ENCODE measurements at regions of chr12 and their contacts with region 1.

Region 1: DNA sequence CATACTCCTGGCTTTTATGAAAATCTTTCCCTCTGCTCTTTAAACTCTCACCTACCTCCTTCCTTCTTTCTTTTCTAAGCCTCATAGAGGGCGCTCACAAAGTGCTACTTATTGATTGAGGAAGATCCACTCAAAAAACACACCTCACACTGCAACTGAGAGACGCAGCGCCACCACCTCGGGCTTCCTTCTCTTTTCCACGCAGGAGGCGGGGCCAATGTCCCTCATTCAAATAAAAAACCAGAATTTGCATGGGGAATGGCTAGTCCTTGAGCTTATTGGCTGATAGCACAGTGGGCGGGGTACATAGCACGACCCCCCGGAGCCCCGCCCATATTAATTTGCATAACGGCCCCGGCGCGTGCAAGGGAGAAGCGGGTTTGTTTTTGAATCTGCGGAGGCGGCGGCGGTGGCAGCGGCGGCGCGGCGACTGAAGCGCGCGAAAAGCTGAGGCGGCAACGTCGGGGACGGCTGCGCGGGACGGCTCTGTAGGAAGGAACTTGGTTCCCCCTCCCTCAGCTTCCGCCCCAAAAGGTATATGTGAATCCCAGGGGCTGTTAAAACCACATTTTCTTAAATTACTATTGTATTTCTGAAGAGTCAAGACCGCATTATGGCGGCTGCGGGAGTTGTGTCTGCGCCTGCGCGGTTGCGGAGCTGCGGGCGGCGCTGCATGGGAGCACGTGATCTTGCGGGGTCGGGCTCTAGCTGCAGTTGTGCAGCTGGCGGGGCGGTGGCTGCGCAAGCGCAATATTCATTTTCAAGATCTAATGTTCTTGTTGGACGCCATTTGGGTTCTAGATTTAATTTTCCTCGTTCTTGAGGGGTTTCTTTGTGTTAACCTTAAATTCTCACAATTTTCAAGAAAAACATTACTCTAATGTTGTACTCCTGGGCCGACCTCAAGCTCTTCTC is at the start of gene ATF7IP:
- H3K4me3 ChIP-seq: peak within 1 kb of the TSS; percentile 74
- H3K27ac ChIP-seq: peak within 1 kb of the TSS; percentile 96
- H3K4me1 ChIP-seq: peaks cover 3% of the 10 kb centered on the region; the same call in 1 of the 2 replicates
- CTCF ChIP-seq: peak; percentile 85; the same call in 1 of the 2 replicates

Region 2: DNA sequence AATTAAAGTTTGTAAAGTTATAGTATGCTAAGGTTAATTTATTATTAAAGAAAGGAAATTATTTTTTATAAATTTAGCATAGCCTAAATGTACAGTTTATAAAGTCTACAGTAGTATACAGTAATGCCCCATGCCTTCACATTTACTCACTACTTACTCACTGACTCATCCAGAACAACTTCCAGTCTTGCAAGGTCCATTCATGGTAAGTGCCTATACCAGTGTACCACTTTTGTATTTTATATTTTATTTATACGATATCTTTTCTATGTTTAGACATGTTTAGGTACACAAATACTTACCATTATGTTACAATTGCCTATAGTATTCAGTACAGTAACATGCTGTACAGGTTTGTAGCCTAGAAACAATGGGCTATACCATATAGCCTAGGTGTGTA is 289.0 kb before region 1 on chr12:
- CTCF ChIA-PET with region 1: no interaction called
- POLR2A ChIA-PET with region 1: no interaction called
- H3K4me3 ChIP-seq: no peak overlapping the region
- H3K27ac ChIP-seq: no peak overlapping the region
- H3K4me1 ChIP-seq: no peaks in the 10 kb centered on the region
- CTCF ChIP-seq: no peak

Region 3: GRCh38 chr12:14257734-14258574 is 107.6 kb before region 1 on chr12:
- CTCF ChIA-PET with region 1: interaction called, 14 read pairs
- POLR2A ChIA-PET with region 1: interaction called, 26 read pairs
- H3K4me3 ChIP-seq: no peak overlapping the region
- H3K27ac ChIP-seq: peak overlapping the region; percentile 48
- H3K4me1 ChIP-seq: peaks cover 9% of the 10 kb centered on the region
- CTCF ChIP-seq: 0 out of 2 replicates have a peak, but pooled peaks have one; percentile 44

Region 4: DNA sequence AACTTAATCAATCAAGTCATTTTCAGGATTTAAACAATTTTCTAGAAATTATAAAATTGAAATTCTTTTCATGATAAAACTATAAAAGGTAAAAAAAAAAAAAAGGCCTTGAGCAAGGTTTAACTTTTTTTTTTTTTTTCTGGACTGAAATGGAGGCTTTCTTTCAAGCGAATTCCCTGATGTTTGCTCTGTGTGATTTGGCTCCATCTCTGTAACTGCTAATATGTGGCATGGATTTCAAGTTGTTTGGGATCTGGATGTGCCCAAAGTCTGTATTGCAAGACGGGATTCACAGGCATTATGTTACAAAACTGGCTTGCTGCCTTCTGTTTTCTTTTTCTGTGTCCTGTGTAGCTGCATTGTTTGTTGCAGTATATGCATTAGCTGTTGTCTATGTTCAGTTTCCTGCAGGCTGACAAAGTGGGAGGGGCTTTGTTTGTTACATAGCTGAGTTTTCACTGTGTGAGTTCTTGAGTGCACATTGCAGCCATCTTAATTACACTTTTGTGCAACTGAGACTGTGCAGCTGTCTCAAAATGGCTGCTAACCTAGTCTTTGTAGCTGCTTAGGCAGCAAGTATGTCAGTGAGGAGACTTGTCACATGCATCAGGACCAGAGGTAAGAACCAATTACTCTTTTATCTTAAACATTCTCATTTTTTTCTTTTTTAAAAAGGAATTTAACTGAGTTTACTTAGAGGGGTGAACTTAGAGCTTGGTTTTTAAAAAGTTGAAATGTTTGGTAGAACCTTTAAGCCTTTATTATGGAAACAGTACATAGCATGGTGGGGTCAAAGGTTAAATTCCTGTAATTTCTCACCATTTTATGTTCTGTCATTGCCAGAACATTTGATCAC is 19.5 kb after region 1 on chr12:
- CTCF ChIA-PET with region 1: interaction called, 7 read pairs
- POLR2A ChIA-PET with region 1: interaction called, 24 read pairs
- H3K4me3 ChIP-seq: peak overlapping the region; percentile 31
- H3K27ac ChIP-seq: peak overlapping the region; percentile 50
- H3K4me1 ChIP-seq: peaks cover 7% of the 10 kb centered on the region; the same call in 1 of the 2 replicates
- CTCF ChIP-seq: no peak

Region 5: DNA sequence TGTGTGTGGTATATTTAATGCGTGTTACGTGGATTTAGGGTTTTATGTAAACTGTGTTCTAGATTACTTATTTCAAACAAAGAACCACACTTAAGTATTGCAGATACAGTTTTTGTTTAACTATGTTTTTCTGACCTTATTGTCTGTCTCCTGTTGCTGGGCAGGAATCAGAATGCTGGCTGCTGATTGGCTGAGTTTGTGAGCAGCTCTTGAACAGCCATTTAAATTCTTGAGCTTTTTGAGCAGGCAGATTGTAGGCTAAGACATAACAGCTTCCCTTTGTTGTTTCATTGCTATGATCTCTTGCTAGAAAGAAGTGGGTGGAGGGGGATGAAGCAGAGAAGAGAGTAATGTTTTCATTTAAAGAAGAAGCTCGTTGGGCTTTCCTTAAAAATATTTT is 52.2 kb after region 1 on chr12:
- CTCF ChIA-PET with region 1: interaction called, 6 read pairs
- POLR2A ChIA-PET with region 1: interaction called, 12 read pairs
- H3K4me3 ChIP-seq: no peak overlapping the region
- H3K27ac ChIP-seq: no peak overlapping the region
- H3K4me1 ChIP-seq: peaks cover 22% of the 10 kb centered on the region
- CTCF ChIP-seq: no peak

Region 6: GRCh38 chr12:14577344-14577743 is 211.8 kb after region 1 on chr12:
- CTCF ChIA-PET with region 1: no interaction called
- POLR2A ChIA-PET with region 1: no interaction called
- H3K4me3 ChIP-seq: no peak overlapping the region
- H3K27ac ChIP-seq: no peak overlapping the region
- H3K4me1 ChIP-seq: no peaks in the 10 kb centered on the region
- CTCF ChIP-seq: no peak

Region 7: GRCh38 chr12:15336768-15337553 is 971.4 kb after region 1 on chr12:
- CTCF ChIA-PET with region 1: no interaction called
- POLR2A ChIA-PET with region 1: no interaction called
- H3K4me3 ChIP-seq: no peak overlapping the region
- H3K27ac ChIP-seq: no peak overlapping the region
- H3K4me1 ChIP-seq: no peaks in the 10 kb centered on the region; the same call in 1 of the 2 replicates
- CTCF ChIP-seq: no peak